ENCODE measurements at regions of chr13 and their contacts with region 1.

Region 1: GRCh38 chr13:76886292-76887075 is at the start of gene KCTD12:
- DNase-seq: peak; percentile 74
- H3K4me3 Mint-ChIP-seq: peak within 1 kb of the TSS; percentile 82
- H3K27ac Mint-ChIP-seq: peak within 1 kb of the TSS; percentile 88
- H3K4me1 Mint-ChIP-seq: peaks cover 29% of the 10 kb centered on the region
- H3K27me3 Mint-ChIP-seq: peaks cover 24% of the 10 kb centered on the region
- total RNA-seq, gene KCTD12: 5.8 to 5.9 TPM

Region 2: GRCh38 chr13:76868371-76868770 is 18.1 kb before region 1 on chr13:
- CTCF ChIA-PET with region 1: interaction called, 17 read pairs
- POLR2A ChIA-PET with region 1: no interaction called
- DNase-seq: no peak
- H3K4me3 Mint-ChIP-seq: no peak overlapping the region
- H3K27ac Mint-ChIP-seq: no peak overlapping the region
- H3K4me1 Mint-ChIP-seq: no peaks in the 10 kb centered on the region
- H3K27me3 Mint-ChIP-seq: peaks cover 28% of the 10 kb centered on the region

Region 3: DNA sequence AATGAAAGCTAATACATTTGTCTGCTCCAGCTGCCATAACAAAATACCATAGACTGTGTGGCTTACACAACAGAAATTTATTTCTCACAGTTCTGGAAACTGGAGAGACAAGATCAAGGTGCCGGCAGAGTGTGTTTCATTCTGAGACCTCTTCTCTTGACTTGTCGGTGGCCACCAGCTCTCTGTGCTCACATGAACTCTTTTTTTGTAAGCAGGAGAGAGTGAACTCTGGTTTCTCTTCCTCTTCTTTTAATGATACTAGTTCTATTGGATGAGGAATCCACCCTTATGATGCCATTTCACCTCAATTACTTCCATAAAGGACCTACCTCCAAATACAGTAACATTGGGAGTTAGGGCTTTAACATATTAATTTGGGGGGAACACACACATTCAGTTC is 12.0 kb before region 1 on chr13:
- CTCF ChIA-PET with region 1: interaction called, 17 read pairs
- POLR2A ChIA-PET with region 1: no interaction called
- DNase-seq: no peak
- H3K4me3 Mint-ChIP-seq: no peak overlapping the region
- H3K27ac Mint-ChIP-seq: no peak overlapping the region
- H3K4me1 Mint-ChIP-seq: peaks cover 9% of the 10 kb centered on the region
- H3K27me3 Mint-ChIP-seq: peaks cover 27% of the 10 kb centered on the region

Measured in activated CD4-positive, alpha-beta T cell treated with anti-CD3 and anti-CD28 coated beads, Interleukin-2, amount 10 ng/mL, durations not matched to agents 7 days and 5 days (primary cell).